Sigmoid colon (tissue), 7 donors: ENCODE measurements at regions of chr12 and their contacts with region 1.

Region 1: GRCh38 chr12:28517101-28517500 is 326.8 kb downstream of the CCDC91 start:
- DNase-seq: no peak
- H3K4me3 ChIP-seq: no peak overlapping the region
- H3K27ac ChIP-seq: no peak overlapping the region
- H3K4me1 ChIP-seq: peaks cover 0 to 11% (median 5%) of the 10 kb centered on the region in 4 donors
- H3K27me3 ChIP-seq: no peaks in the 10 kb centered on the region
- CTCF ChIP-seq: no peak
- EP300 ChIP-seq: no peak
- POLR2A ChIP-seq: no peak

Region 2: GRCh38 chr12:28575593-28576205 is 58.6 kb after region 1 on chr12:
- intact Hi-C with region 1: loop called (anchors 2 kb)
- DNase-seq: no peak
- H3K4me3 ChIP-seq: no peak overlapping the region
- H3K27ac ChIP-seq: peak overlapping the region in 3 of 4 donors; percentile 8 to 41 (median 39)
- H3K4me1 ChIP-seq: peaks cover 0 to 34% (median 24%) of the 10 kb centered on the region in 4 donors
- H3K27me3 ChIP-seq: no peaks in the 10 kb centered on the region
- CTCF ChIP-seq: no peak
- EP300 ChIP-seq: no peak
- POLR2A ChIP-seq: no peak